Activated B cell treated with CpG ODN at 0.5 μM for 24 hours (primary cell): ENCODE measurements at regions of chr19 and their contacts with region 1.

Region 1: DNA sequence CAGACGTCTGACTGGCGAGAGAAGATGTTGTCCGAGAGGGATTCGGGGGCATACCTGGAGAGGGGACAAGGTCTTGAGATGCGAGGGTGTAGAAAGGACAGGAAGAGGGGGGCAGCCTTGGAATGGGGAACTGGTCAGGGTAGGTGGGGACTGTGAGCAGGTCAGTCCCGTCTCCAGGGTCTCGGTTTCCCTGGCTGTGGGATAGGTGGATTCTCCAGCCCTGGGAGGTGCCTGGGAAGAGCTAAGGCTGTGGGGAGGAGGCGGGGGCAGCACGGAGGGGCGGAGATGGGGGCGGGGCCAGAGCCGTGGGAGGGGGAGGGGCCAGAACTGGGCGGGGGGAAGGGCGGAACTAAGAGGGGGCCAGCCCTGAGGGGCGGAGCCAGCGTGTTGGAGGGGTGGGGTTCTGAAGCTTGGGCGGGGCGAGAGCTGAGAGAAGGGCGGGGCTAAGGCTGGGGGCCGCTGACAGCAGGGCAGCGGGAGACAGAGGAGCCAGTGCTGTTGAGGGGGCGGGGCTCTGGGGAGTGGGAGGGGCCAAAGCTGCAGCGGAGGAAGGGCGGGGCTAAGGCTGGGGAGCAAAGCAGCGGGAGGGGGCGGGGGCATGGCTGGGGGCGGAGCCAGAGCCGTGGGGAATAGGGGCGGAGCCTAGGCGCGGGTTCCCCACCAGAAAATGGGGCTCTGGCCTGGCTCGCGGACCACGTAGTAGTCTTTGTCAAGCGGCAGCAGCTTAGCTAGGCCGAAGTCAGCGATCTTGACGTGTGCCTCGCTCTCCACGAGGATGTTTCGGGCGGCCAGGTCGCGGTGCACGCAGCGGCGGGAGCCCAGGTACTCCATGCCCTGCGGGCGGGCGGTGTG is 9.5 kb upstream of the INSL3 start:
- DNase-seq: no peak
- ATAC-seq: peak; percentile 72
- H3K4me3 Mint-ChIP-seq: no peak overlapping the region
- H3K27ac Mint-ChIP-seq: no peak overlapping the region
- H3K4me1 Mint-ChIP-seq: no peaks in the 10 kb centered on the region
- H3K27me3 Mint-ChIP-seq: no peaks in the 10 kb centered on the region
- CTCF ChIP-seq: no peak

Region 2: DNA sequence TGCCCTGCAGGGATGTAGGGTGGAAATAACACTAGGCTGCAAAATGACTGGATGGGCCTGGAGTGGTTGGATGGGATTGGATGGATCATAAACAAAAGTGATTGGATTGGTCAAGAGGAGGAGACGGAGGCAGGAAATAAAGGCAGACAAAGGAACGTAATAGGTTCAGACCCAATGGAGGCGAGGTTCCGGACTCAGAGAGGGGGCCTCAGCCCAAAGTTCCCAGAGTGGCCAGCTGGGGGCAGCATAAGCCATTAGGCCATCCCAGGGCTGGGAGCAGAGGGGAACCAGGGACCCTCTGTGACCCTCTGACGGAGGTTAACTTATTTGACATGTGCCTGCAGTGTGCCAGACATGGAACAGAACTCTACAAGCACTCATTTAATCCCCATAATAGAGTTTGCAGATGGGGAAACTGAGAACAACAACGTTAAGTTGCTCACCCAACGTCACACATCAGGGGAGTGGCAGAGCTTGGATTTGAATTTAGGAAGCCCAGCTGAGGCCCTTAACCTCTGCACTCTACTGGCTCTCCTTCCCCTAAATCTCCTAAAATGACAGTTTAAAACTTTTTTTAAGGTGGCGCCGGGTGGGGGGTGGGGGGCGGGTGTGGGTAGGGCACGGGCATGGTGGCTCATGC is 126.8 kb before region 1 on chr19:
- CTCF ChIA-PET with region 1: no interaction called
- POLR2A ChIA-PET with region 1: no interaction called
- intact Hi-C with region 1: no loop called
- DNase-seq: peak; percentile 70
- ATAC-seq: peak; percentile 97
- H3K4me3 Mint-ChIP-seq: no peak overlapping the region
- H3K27ac Mint-ChIP-seq: no peak overlapping the region
- H3K4me1 Mint-ChIP-seq: peaks cover 2% of the 10 kb centered on the region
- H3K27me3 Mint-ChIP-seq: peaks cover 8% of the 10 kb centered on the region
- CTCF ChIP-seq: peak; percentile 64

Region 3: GRCh38 chr19:17847538-17848366 is 17.0 kb after region 1 on chr19 and contains the start of gene JAK3:
- CTCF ChIA-PET with region 1: interaction called, 4 read pairs
- POLR2A ChIA-PET with region 1: interaction called, 20 read pairs
- intact Hi-C with region 1: no loop called
- DNase-seq: peak; percentile 79
- ATAC-seq: peak; percentile 86
- H3K4me3 Mint-ChIP-seq: peak within 1 kb of the TSS; percentile 94
- H3K27ac Mint-ChIP-seq: peak within 1 kb of the TSS; percentile 96
- H3K4me1 Mint-ChIP-seq: peaks cover 73% of the 10 kb centered on the region
- H3K27me3 Mint-ChIP-seq: no peaks in the 10 kb centered on the region
- CTCF ChIP-seq: no peak
- total RNA-seq, gene JAK3: 213 and 256 TPM in 2 replicates

Region 4: DNA sequence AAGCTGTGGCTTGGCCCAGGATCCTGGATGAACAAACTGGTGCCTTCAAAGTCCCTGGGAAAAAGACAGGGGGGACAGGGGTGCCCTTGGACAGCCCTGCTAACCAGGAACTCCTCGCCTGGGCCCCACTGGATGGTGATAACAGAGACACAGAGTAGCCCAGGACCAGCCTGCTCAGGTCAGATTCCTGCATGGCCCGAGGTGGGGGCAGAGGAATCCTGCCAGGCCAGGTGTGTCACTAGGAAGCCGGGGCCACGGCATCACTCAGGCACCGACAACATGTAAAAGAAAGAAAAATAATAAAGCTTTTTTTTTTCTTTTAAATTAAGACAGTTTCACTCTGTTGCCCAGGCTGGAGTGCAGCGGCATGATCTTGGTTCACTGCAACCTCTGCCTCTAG is 23.3 kb after region 1 on chr19:
- CTCF ChIA-PET with region 1: interaction called, 4 read pairs
- POLR2A ChIA-PET with region 1: interaction called, 15 read pairs
- intact Hi-C with region 1: no loop called
- DNase-seq: no peak
- ATAC-seq: no peak
- H3K4me3 Mint-ChIP-seq: no peak overlapping the region
- H3K27ac Mint-ChIP-seq: no peak overlapping the region
- H3K4me1 Mint-ChIP-seq: peaks cover 36% of the 10 kb centered on the region
- H3K27me3 Mint-ChIP-seq: no peaks in the 10 kb centered on the region
- CTCF ChIP-seq: no peak

Region 5: GRCh38 chr19:17889609-17890214 is 58.9 kb after region 1 on chr19:
- CTCF ChIA-PET with region 1: no interaction called
- POLR2A ChIA-PET with region 1: no interaction called
- intact Hi-C with region 1: no loop called
- DNase-seq: no peak
- ATAC-seq: no peak
- H3K4me3 Mint-ChIP-seq: no peak overlapping the region
- H3K27ac Mint-ChIP-seq: no peak overlapping the region
- H3K4me1 Mint-ChIP-seq: peaks cover 25% of the 10 kb centered on the region
- H3K27me3 Mint-ChIP-seq: peaks cover 6% of the 10 kb centered on the region
- CTCF ChIP-seq: no peak